ENCODE measurements at regions of chr1 and their contacts with region 1.

Region 1: GRCh38 chr1:84582802-84583587 is 8.8 kb upstream of the CTBS start:
- DNase-seq: no peak
- H3K4me3 ChIP-seq: no peak overlapping the region
- H3K27ac ChIP-seq: no peak overlapping the region
- H3K4me1 ChIP-seq: no peaks in the 10 kb centered on the region
- H3K27me3 ChIP-seq: no peaks in the 10 kb centered on the region
- CTCF ChIP-seq: no peak
- POLR2A ChIP-seq: no peak

Region 2: GRCh38 chr1:84620720-84621313 is 37.8 kb after region 1 on chr1:
- intact Hi-C with region 1: no loop called
- DNase-seq: peak; percentile 49 to 78
- H3K4me3 ChIP-seq: peak overlapping the region; percentile 43 to 65 (median 63)
- H3K27ac ChIP-seq: peak overlapping the region; percentile 34 to 46
- H3K4me1 ChIP-seq: no peaks in the 10 kb centered on the region
- H3K27me3 ChIP-seq: no peaks in the 10 kb centered on the region
- CTCF ChIP-seq: peak; percentile 63 to 81 (median 73)
- POLR2A ChIP-seq: no peak

Region 3: DNA sequence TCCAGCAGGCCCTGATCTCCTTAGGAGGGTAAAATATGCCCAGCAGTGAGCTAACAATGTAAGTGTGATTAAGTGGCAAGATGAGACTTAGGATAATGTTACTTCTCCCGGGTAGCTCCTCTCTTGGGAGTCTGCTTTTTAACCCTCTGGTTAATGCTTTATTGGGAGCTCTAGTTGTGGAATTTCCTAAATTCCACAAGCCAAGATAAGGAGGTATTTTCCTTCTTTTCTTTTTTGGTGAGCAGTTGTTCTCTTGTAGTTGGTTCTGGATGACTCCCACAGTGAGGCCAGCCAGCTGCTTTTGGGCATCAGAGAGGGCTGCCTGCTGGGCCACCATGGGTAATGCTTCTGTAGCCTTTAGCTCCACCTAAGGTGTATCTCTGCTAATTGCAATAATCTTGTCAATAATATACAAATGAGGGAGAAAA is 657.2 kb after region 1 on chr1:
- intact Hi-C with region 1: loop called (anchors 10 kb)
- DNase-seq: no peak
- H3K4me3 ChIP-seq: no peak overlapping the region
- H3K27ac ChIP-seq: no peak overlapping the region
- H3K4me1 ChIP-seq: no peaks in the 10 kb centered on the region
- H3K27me3 ChIP-seq: no peaks in the 10 kb centered on the region
- CTCF ChIP-seq: peak in 1 of 3 donors; percentile 26
- POLR2A ChIP-seq: no peak

Measured in breast epithelium (tissue), 4 donors.